ENCODE measurements at regions of chr5 and their contacts with region 1.

Region 1: GRCh38 chr5:149114403-149115312 is 26.6 kb upstream of the ABLIM3 start:
- DNase-seq: peak; percentile 59
- ATAC-seq: peak; percentile 99
- H3K4me3 Mint-ChIP-seq: no peak overlapping the region
- H3K27ac Mint-ChIP-seq: no peak overlapping the region
- H3K4me1 Mint-ChIP-seq: no peaks in the 10 kb centered on the region
- H3K27me3 Mint-ChIP-seq: no peaks in the 10 kb centered on the region; the same call in 1 of the 2 replicates
- CTCF ChIP-seq: peak; percentile 48

Region 2: DNA sequence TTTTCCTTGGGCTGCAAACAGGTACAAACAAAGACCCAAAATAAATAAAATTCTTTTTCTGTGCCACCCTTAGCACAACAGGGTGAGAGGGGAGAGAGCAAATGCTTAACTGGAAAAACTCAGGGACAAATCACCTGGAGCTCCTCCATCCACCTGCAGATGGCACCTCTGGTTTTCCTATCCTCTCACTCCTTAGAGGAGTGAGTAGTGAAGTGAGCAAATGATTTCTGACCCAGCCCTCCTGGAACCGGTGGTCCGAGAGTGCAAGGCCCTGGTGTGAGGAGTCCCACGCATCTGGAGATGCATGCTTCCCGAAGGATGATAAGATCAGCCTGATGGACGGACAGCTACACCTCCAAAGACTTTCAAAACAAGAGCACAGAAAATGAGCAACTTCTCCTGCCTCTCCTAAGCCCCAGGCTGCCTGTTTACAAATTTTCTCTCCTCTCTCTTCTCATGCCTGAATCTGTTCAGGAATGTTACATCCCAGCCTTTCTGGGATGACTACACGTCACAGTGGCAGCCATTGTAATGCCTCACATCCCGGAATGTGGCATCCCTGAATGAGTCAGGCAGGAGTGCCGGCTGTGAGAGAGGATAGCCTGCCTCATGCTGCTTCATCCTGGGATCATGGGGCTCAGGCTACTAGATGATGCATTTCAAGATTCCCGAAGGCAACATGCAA is 201.8 kb before region 1 on chr5:
- CTCF ChIA-PET with region 1: interaction called, 14 read pairs
- POLR2A ChIA-PET with region 1: no interaction called
- DNase-seq: peak; percentile 55
- ATAC-seq: peak; percentile 84
- H3K4me3 Mint-ChIP-seq: no peak overlapping the region
- H3K27ac Mint-ChIP-seq: peak overlapping the region; percentile 93
- H3K4me1 Mint-ChIP-seq: peaks cover 30% of the 10 kb centered on the region
- H3K27me3 Mint-ChIP-seq: no peaks in the 10 kb centered on the region
- CTCF ChIP-seq: 0 out of 2 replicates have a peak, but pooled peaks have one; percentile 0

Region 3: GRCh38 chr5:149011074-149011476 is 103.6 kb before region 1 on chr5:
- CTCF ChIA-PET with region 1: interaction called, 18 read pairs
- POLR2A ChIA-PET with region 1: no interaction called
- DNase-seq: no peak
- ATAC-seq: no peak
- H3K4me3 Mint-ChIP-seq: no peak overlapping the region
- H3K27ac Mint-ChIP-seq: no peak overlapping the region
- H3K4me1 Mint-ChIP-seq: no peaks in the 10 kb centered on the region
- H3K27me3 Mint-ChIP-seq: no peaks in the 10 kb centered on the region
- CTCF ChIP-seq: no peak

Region 4: GRCh38 chr5:149053072-149053695 is 61.5 kb before region 1 on chr5:
- CTCF ChIA-PET with region 1: interaction called, 10 read pairs
- POLR2A ChIA-PET with region 1: no interaction called
- DNase-seq: no peak
- ATAC-seq: no peak
- H3K4me3 Mint-ChIP-seq: no peak overlapping the region
- H3K27ac Mint-ChIP-seq: no peak overlapping the region
- H3K4me1 Mint-ChIP-seq: no peaks in the 10 kb centered on the region
- H3K27me3 Mint-ChIP-seq: no peaks in the 10 kb centered on the region; the same call in 1 of the 2 replicates
- CTCF ChIP-seq: no peak

Region 5: DNA sequence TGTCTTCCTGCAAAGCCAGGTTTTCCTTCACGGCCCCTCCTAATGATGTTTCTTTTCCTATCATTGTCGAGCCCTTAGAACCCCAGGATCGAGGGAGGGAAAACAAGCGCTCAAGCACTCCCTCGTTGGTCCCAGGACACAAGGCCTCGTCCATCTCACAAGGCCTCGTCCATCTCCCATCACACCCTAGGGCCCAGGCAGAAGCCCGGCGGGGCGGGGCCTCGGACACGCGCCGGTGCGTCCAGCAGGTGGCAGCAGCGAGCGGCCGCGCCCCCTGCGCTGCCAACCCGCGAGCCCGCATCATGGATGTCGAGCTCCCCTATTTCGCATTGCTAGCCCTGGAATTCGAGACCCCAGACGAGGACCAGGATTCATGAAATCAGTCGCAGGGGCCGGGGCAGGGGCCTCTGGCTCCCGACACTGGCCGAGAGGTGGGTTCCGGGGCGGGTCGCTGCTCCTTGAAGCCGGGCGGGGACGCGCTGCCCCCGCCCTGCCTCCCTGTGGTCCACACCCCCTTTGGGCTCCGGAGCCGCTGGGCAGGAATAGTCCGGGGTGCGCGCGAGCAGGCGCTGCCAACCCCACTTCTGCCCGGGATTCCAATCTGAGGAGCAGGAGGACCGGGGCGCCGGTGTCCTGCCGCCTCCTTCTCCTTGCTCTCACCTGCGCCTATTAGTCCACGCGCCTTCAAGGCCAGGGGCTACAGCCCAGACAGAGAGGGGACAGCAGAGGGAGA is 26.7 kb after region 1 on chr5 and contains the start of gene ABLIM3:
- CTCF ChIA-PET with region 1: interaction called, 10 read pairs
- POLR2A ChIA-PET with region 1: no interaction called
- DNase-seq: peak; percentile 76
- ATAC-seq: peak; percentile 84
- H3K4me3 Mint-ChIP-seq: peak within 1 kb of the TSS; percentile 71
- H3K27ac Mint-ChIP-seq: no peak within 1 kb of the TSS
- H3K4me1 Mint-ChIP-seq: peaks cover 7% of the 10 kb centered on the region; the same call in 1 of the 2 replicates
- H3K27me3 Mint-ChIP-seq: peaks cover 34% of the 10 kb centered on the region
- CTCF ChIP-seq: peak; percentile 92
- total RNA-seq, gene ABLIM3: 0.33 to 0.69 TPM (median 0.46 TPM) in 3 replicates

Region 6: GRCh38 chr5:149195337-149195887 is 80.8 kb after region 1 on chr5:
- CTCF ChIA-PET with region 1: no interaction called
- POLR2A ChIA-PET with region 1: no interaction called
- DNase-seq: no peak
- ATAC-seq: no peak
- H3K4me3 Mint-ChIP-seq: no peak overlapping the region
- H3K27ac Mint-ChIP-seq: no peak overlapping the region
- H3K4me1 Mint-ChIP-seq: 0 out of 2 replicates have a peak, but pooled peaks cover 2% of the 10 kb centered on the region
- H3K27me3 Mint-ChIP-seq: no peaks in the 10 kb centered on the region
- CTCF ChIP-seq: no peak